ENCODE measurements at regions of chr2 and their contacts with region 1.

Region 1: GRCh38 chr2:162343824-162344616 is at the start of gene GCA:
- DNase-seq: peak; percentile 97
- H3K4me3 Mint-ChIP-seq: peak within 1 kb of the TSS; percentile 94
- H3K27ac Mint-ChIP-seq: peak within 1 kb of the TSS; percentile 77
- H3K4me1 Mint-ChIP-seq: peaks cover 16% of the 10 kb centered on the region
- H3K27me3 Mint-ChIP-seq: peaks cover 19% of the 10 kb centered on the region
- total RNA-seq, gene GCA: 14.5 and 14.9 TPM in 2 replicates

Region 2: DNA sequence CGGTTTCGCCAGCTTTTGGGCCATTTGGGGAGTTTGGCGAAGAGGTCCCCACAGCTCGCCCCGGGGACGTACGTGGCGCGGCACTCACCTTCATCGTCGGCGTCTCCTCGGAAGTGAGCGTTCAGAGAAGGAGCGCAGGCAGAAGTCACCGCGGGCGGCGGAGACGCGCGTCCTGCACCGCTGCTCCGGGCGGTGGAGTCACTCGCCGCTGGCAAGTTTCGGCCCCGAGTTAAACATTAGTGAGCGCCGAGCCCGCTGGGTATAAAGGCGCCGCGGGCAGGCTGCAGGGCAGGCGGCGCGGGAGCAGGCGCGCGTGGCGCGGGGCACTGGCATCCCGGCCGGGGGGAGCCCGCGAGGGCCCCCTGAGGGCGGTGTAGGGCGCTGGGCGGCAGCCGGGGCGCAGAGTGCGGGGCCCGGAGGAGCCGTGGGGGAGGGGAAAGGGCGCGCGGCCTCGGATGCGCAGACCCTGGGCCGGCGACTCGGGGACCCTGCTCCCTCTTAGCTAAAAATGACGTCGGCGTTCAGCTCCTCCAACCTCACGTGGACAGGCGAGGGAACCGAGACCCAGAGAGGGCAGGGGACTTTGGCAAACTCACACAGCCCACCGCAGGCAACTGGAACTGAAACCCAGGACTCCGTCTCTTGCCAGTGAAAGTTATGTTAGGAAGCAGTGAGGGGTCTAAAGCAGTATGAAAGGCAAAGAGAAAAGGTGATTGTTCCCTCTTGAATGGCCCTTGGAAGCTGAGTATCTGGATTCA is 270.0 kb before region 1 on chr2 and contains the start of gene DPP4:
- intact Hi-C with region 1: no loop called
- DNase-seq: peak; percentile 42
- H3K4me3 Mint-ChIP-seq: peak within 1 kb of the TSS; percentile 98
- H3K27ac Mint-ChIP-seq: peak within 1 kb of the TSS; percentile 93
- H3K4me1 Mint-ChIP-seq: peaks cover 55% of the 10 kb centered on the region
- H3K27me3 Mint-ChIP-seq: no peaks in the 10 kb centered on the region
- total RNA-seq, gene DPP4: 94.4 and 99.9 TPM in 2 replicates

Region 3: GRCh38 chr2:162318328-162319180 is 25.5 kb before region 1 on chr2 and contains the start of gene IFIH1:
- intact Hi-C with region 1: loop called (anchors 1 kb)
- DNase-seq: peak; percentile 79
- H3K4me3 Mint-ChIP-seq: peak within 1 kb of the TSS; percentile 93
- H3K27ac Mint-ChIP-seq: peak within 1 kb of the TSS; percentile 100
- H3K4me1 Mint-ChIP-seq: peaks cover 65% of the 10 kb centered on the region
- H3K27me3 Mint-ChIP-seq: no peaks in the 10 kb centered on the region
- total RNA-seq, gene IFIH1: 27.9 TPM in 2 replicates

Region 4: GRCh38 chr2:163401481-163401880 is 1057.5 kb after region 1 on chr2:
- intact Hi-C with region 1: no loop called
- DNase-seq: no peak
- H3K4me3 Mint-ChIP-seq: no peak overlapping the region
- H3K27ac Mint-ChIP-seq: no peak overlapping the region
- H3K4me1 Mint-ChIP-seq: no peaks in the 10 kb centered on the region
- H3K27me3 Mint-ChIP-seq: no peaks in the 10 kb centered on the region

Measured in activated T-helper 1 cell treated with anti-CD3 and anti-CD28 coated beads, Interleukin-12 subunit alpha, Interleukin-12 subunit beta, Interleukin-2, Interleukin-4 antibody, amounts not matched to agents 30 ng/mL and 10 ng/mL and 1 ng/mL, durations not matched to agents 14 hours and 24 hours and 36 hours (primary cell).